Activated CD4-positive, alpha-beta T cell treated with anti-CD3 and anti-CD28 coated beads, Interleukin-2, amount 10 ng/mL, durations not matched to agents 7 days and 5 days (primary cell): ENCODE measurements at regions of chr4 and their contacts with region 1.

Region 1: GRCh38 chr4:18171896-18172295 is 150.3 kb upstream of the LCORL start:
- DNase-seq: no peak
- H3K4me3 Mint-ChIP-seq: no peak overlapping the region
- H3K27ac Mint-ChIP-seq: no peak overlapping the region
- H3K4me1 Mint-ChIP-seq: no peaks in the 10 kb centered on the region
- H3K27me3 Mint-ChIP-seq: no peaks in the 10 kb centered on the region

Region 2: DNA sequence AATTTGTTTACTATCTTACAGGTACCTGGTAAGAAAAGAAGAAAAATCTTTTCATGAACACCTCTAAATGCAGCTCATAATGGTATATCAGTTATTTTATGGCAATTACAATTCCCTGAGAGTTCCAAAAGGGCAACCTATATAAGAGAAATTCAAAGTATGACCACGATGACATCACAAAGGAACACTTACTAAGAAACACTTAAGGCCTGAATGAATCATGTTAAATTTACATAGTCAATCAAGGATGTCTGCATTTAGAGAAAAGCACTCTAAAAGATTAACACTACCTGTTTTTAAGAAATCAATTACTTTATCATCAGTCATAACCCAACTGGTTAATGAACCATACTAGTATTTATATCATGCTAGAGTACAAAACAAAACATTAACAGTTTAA is 214.2 kb before region 1 on chr4:
- CTCF ChIA-PET with region 1: no interaction called
- POLR2A ChIA-PET with region 1: no interaction called
- DNase-seq: no peak
- H3K4me3 Mint-ChIP-seq: no peak overlapping the region
- H3K27ac Mint-ChIP-seq: no peak overlapping the region
- H3K4me1 Mint-ChIP-seq: no peaks in the 10 kb centered on the region
- H3K27me3 Mint-ChIP-seq: no peaks in the 10 kb centered on the region

Region 3: GRCh38 chr4:18185491-18185890 is 13.6 kb after region 1 on chr4:
- CTCF ChIA-PET with region 1: no interaction called
- POLR2A ChIA-PET with region 1: no interaction called
- DNase-seq: no peak
- H3K4me3 Mint-ChIP-seq: no peak overlapping the region
- H3K27ac Mint-ChIP-seq: no peak overlapping the region
- H3K4me1 Mint-ChIP-seq: no peaks in the 10 kb centered on the region
- H3K27me3 Mint-ChIP-seq: no peaks in the 10 kb centered on the region

Region 4: GRCh38 chr4:18242919-18243693 is 71.2 kb after region 1 on chr4:
- CTCF ChIA-PET with region 1: no interaction called
- POLR2A ChIA-PET with region 1: interaction called, 11 read pairs
- DNase-seq: no peak
- H3K4me3 Mint-ChIP-seq: no peak overlapping the region
- H3K27ac Mint-ChIP-seq: no peak overlapping the region
- H3K4me1 Mint-ChIP-seq: no peaks in the 10 kb centered on the region
- H3K27me3 Mint-ChIP-seq: no peaks in the 10 kb centered on the region